ENCODE measurements at regions of chr9 and their contacts with region 1.

Region 1: DNA sequence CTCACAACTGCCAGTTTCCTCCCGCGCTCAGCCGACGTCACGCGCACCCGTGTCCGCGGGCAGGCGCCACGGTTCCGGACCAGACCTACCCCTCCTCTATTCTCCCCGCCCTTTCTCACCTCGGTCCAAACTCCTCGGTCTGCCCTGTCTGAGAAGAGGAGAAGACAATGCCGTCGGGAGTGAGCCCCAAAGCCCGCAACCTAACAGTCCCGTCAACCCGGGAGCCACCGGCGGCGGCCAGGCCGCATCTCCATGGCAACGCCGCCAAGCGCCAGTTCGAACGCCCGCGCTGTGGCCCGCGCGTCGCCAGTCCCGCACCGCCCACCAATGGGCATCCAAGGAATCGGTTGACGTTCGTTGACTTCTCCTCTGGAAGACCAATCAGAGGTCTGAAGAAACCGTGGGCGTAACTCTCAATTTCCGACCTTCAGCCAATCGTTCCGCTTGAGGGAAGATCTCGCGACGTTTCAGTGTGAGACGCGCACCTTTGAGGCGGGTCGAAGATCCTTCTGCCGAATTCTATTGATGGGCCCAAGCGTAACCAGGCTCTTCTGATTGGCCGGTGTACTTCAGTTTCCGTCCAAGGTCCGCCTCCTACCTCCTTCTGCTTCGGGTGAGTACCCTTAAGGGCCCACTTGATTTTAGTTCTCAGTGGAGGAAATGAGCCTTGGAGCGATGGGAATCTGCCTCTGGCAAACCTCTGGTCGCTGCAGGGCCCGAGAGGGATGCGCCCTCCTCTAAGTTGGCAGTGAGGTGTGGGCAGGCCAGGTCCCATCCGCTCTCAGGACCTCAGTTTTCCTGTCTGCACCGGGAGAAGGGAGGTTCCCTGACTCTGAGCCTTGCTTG is at the starts of genes KIF24 and NUDT2:
- DNase-seq: peak; percentile 88
- ATAC-seq: peak; percentile 91
- H3K4me3 Mint-ChIP-seq: peak within 1 kb of the TSS; percentile 92
- H3K27ac Mint-ChIP-seq: peak within 1 kb of the TSS; percentile 96
- H3K4me1 Mint-ChIP-seq: peaks cover 38% of the 10 kb centered on the region
- H3K27me3 Mint-ChIP-seq: no peaks in the 10 kb centered on the region
- CTCF ChIP-seq: no peak
- total RNA-seq, gene KIF24: 0.69 and 0.71 TPM in 2 replicates
- total RNA-seq, gene NUDT2: 19.2 and 19.7 TPM in 2 replicates

Region 2: GRCh38 chr9:33024966-33025571 is 1304.1 kb before region 1 on chr9 and contains the start of gene DNAJA1:
- CTCF ChIA-PET with region 1: no interaction called
- POLR2A ChIA-PET with region 1: no interaction called
- intact Hi-C with region 1: loop called (anchors 10 kb)
- DNase-seq: peak; percentile 98
- ATAC-seq: peak; percentile 84
- H3K4me3 Mint-ChIP-seq: peak within 1 kb of the TSS; percentile 95
- H3K27ac Mint-ChIP-seq: peak within 1 kb of the TSS; percentile 88
- H3K4me1 Mint-ChIP-seq: peaks cover 63% of the 10 kb centered on the region
- H3K27me3 Mint-ChIP-seq: no peaks in the 10 kb centered on the region
- CTCF ChIP-seq: no peak
- total RNA-seq, gene DNAJA1: 107 and 117 TPM in 2 replicates

Region 3: GRCh38 chr9:34048923-34049697 is 280.1 kb before region 1 on chr9:
- CTCF ChIA-PET with region 1: no interaction called
- POLR2A ChIA-PET with region 1: no interaction called
- intact Hi-C with region 1: loop called (anchors 1 kb)
- DNase-seq: peak; percentile 97
- ATAC-seq: peak; percentile 80
- H3K4me3 Mint-ChIP-seq: peak overlapping the region; percentile 99
- H3K27ac Mint-ChIP-seq: peak overlapping the region; percentile 100
- H3K4me1 Mint-ChIP-seq: peaks cover 25% of the 10 kb centered on the region
- H3K27me3 Mint-ChIP-seq: no peaks in the 10 kb centered on the region
- CTCF ChIP-seq: no peak

Region 4: DNA sequence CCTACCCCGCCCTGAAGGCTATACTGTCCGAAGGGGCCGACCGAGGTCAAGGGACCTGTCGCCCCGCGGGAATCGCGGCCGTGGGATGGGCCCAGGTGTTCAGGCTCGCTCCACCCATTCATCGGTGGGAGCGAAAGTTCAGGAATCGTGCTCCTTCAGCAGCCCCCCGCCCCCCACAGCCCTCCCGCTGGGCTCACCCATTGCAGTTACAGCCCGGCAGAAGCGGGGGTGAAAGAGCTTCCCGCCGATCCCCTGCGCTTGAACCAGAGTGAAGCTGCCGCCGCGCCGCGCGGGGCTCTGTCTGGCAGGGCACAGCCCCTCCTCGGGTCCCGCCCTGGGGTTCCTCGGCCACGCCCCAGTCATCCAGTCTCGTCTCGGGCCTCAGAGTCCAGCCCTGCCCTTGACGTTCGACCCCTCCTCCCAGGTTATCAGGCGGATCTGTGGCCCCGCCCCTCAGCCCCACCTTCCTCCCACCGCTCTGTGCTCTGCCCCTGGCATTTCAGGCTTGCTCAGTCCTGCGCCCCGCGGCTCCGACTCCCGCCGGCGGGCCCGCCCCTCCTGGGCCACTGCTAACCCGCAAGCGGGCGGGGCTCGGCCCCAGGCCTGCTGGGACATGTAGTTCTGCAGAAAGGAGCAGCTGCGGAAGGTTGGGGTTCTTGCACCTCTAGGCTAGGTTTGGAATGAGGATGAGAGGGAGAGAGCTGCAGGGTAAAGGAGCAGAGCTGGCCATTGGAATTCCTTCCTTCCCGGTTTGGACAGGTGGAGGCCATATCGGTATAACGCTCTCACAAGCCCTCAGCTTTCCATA is 47.6 kb after region 1 on chr9 and contains the start of gene MYORG:
- CTCF ChIA-PET with region 1: interaction called, 13 read pairs
- POLR2A ChIA-PET with region 1: interaction called, 9 read pairs
- intact Hi-C with region 1: loop called (anchors 1 kb)
- DNase-seq: peak; percentile 94
- ATAC-seq: peak; percentile 85
- H3K4me3 Mint-ChIP-seq: peak within 1 kb of the TSS; percentile 93
- H3K27ac Mint-ChIP-seq: peak within 1 kb of the TSS; percentile 75
- H3K4me1 Mint-ChIP-seq: peaks cover 42% of the 10 kb centered on the region
- H3K27me3 Mint-ChIP-seq: peaks cover 2% of the 10 kb centered on the region
- CTCF ChIP-seq: no peak
- total RNA-seq, gene MYORG: 0.24 and 0.27 TPM in 2 replicates

Region 5: DNA sequence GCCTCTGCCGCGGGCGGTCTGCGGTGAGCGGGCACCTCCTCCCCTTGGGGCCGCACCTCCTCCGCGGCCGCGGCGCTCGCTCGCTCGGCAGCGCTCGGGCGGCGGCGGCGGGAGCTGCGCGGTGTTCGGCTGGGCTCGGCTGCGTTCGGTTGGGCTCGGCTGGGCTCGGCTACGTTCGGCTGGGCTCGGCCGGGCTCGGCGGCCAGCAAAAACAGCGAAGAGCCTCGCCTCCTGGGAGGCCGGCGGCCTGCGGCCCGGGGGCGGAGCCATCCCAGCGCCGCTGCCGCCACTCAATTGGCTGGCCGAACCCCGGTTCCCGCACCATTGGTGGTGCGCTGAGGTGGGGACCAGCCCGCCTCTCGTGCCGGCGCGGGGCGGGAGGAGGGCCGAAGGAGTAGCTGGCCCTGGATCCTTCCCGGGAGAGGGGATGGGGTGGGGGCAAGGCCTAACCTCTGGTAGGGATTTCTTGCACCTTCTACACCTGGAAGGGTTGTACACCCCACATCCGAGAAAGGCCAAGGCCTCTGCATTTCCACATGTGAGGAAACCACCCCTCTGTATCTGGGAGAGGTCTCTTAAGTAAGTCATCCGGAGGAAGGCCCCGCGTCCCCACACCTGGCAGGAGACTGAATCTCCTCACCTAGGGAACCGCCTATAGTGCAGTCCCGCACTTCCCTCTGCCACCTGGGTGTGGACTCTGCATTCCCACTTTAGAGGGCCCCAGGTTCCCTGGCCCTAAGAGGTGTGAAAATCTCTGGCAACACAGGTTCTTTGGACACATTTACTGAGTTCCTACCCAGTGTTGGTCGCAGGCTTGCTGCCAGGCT is 194.0 kb after region 1 on chr9 and contains the start of gene ENHO:
- CTCF ChIA-PET with region 1: no interaction called
- POLR2A ChIA-PET with region 1: no interaction called
- intact Hi-C with region 1: loop called (anchors 5 kb)
- DNase-seq: peak; percentile 93
- ATAC-seq: peak; percentile 98
- H3K4me3 Mint-ChIP-seq: peak within 1 kb of the TSS; percentile 66
- H3K27ac Mint-ChIP-seq: no peak within 1 kb of the TSS
- H3K4me1 Mint-ChIP-seq: peaks cover 9% of the 10 kb centered on the region
- H3K27me3 Mint-ChIP-seq: peaks cover 19% of the 10 kb centered on the region
- CTCF ChIP-seq: no peak
- total RNA-seq, gene ENHO: not detected in 2 replicates

Region 6: GRCh38 chr9:34620061-34620994 is 291.1 kb after region 1 on chr9 and contains the start of gene DCTN3:
- CTCF ChIA-PET with region 1: no interaction called
- POLR2A ChIA-PET with region 1: no interaction called
- intact Hi-C with region 1: loop called (anchors 5 kb)
- DNase-seq: peak; percentile 69
- ATAC-seq: peak; percentile 98
- H3K4me3 Mint-ChIP-seq: peak within 1 kb of the TSS; percentile 95
- H3K27ac Mint-ChIP-seq: peak within 1 kb of the TSS; percentile 73
- H3K4me1 Mint-ChIP-seq: peaks cover 29% of the 10 kb centered on the region
- H3K27me3 Mint-ChIP-seq: peaks cover 30% of the 10 kb centered on the region
- CTCF ChIP-seq: no peak
- total RNA-seq, gene DCTN3: 63.9 and 64.3 TPM in 2 replicates

Measured in activated B cell treated with CpG ODN at 0.5 μM for 24 hours (primary cell).